PC-3 (cell line): ENCODE measurements at regions of chr18 and their contacts with region 1.

Region 1: DNA sequence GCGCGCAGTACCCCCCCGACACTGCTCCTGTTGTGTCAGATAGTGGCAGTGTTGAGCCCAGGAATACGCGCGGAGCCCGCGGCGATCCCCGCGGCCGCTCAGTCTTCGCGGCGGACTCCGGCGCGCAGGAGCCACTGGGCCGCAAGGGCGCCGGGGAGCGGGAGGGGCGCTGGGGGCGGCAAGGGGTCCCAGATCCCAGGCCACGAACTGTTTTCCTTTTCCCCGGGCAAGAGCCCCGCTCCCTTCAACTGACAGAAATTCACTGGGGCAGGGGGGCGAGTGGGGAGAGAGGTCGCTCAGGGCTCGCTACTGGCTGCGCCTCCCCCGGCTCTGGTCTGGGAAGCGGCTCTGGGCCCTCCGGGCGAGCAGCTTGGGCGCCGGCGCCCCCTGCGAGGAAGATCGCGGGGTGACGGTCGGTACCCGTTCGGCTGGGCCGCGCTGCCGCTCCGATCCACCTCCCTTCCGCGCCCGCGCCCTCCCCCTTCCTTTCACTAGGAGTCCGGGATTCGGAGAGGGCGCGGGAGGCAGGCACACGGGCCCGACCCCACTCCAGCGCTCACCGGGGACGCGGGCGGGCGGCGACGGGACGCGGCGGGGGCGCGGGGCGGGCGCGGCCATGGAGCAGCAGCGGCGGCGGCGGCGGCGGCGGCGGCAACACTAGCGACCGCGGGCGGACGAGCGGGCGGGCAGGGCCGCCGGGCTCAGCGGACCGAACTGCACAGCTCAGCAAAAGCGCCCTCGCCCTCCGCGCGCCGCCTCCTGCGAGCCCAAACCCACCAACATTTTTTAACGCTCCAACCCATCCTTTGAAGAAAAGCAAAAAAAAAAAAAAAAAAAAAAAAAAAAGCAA is 1.4 kb upstream of the SETBP1 start:
- DNase-seq: peak; percentile 67
- ATAC-seq: peak; percentile 80
- H3K4me3 ChIP-seq: peak overlapping the region; percentile 73
- H3K27ac ChIP-seq: peak overlapping the region; percentile 43
- H3K4me1 ChIP-seq: peaks cover 11% of the 10 kb centered on the region; the same call in 1 of the 2 replicates
- H3K27me3 ChIP-seq: no peaks in the 10 kb centered on the region
- CTCF ChIP-seq: peak; percentile 43; the same call in 1 of the 2 replicates

Region 2: DNA sequence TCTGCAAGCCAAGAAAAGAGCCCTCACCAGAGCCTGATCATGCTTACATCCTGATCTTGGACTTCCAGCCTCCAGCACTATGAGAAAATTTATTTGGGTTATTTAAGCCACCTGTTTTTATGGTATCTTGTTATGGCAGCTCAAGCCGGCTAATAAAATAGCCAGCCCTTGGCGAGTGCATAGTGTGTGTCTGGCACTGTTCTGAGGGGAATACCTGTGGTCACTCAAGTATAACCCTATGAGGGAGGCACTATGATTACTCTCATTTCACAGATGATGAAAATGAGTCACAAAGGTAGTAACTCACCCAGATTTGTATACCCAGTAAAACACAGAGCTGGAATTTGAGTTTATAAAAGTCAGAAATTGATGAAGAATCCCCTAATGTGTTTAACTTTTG is 555.5 kb before region 1 on chr18:
- CTCF ChIA-PET with region 1: interaction called, 7 read pairs
- POLR2A ChIA-PET with region 1: no interaction called
- intact Hi-C with region 1: loop called (anchors 10 kb)
- DNase-seq: peak; percentile 55
- ATAC-seq: peak; percentile 96
- H3K4me3 ChIP-seq: no peak overlapping the region
- H3K27ac ChIP-seq: no peak overlapping the region
- H3K4me1 ChIP-seq: peaks cover 3% of the 10 kb centered on the region; the same call in 1 of the 2 replicates
- H3K27me3 ChIP-seq: no peaks in the 10 kb centered on the region
- CTCF ChIP-seq: no peak

Region 3: GRCh38 chr18:44464398-44465180 is 214.7 kb before region 1 on chr18:
- CTCF ChIA-PET with region 1: no interaction called
- POLR2A ChIA-PET with region 1: no interaction called
- intact Hi-C with region 1: no loop called
- DNase-seq: no peak
- ATAC-seq: no peak
- H3K4me3 ChIP-seq: no peak overlapping the region
- H3K27ac ChIP-seq: no peak overlapping the region
- H3K4me1 ChIP-seq: no peaks in the 10 kb centered on the region
- H3K27me3 ChIP-seq: no peaks in the 10 kb centered on the region
- CTCF ChIP-seq: no peak

Region 4: DNA sequence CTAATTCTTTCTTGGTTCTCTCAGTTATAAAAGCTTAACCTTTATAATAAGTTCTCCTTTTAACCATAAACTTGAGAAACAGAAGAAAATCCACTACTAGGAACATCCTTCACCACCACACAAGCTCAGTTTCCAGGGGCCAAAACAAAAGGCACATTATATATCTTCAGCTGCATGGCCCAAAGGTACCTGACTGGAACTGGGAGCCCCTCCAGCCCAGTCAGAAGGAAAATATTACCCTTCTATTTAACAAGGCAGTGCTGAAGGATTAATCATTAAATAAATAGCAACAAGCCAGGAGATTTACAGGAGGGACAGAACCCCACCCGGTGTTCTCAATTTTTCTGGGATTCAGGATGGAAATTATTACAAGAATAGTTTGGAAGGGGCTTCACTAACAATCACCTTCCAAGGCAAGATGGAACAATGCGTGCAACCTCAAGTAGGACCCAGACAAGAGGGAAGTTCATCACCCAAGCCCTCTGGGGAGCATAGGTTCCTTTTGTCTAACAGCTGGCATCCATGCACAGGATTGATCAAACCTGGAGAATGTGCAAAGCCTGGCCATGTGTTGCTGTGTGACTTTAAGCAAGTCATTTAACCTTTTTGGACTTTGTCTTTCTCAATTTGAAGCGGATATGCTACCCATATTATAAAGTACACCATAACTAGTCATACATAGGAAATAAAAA is 158.2 kb before region 1 on chr18:
- CTCF ChIA-PET with region 1: no interaction called
- POLR2A ChIA-PET with region 1: interaction called, 11 read pairs
- intact Hi-C with region 1: no loop called
- DNase-seq: peak; percentile 71
- ATAC-seq: peak; percentile 94
- H3K4me3 ChIP-seq: peak overlapping the region; percentile 9; the same call in 1 of the 2 replicates
- H3K27ac ChIP-seq: peak overlapping the region; percentile 91
- H3K4me1 ChIP-seq: peaks cover 35% of the 10 kb centered on the region
- H3K27me3 ChIP-seq: no peaks in the 10 kb centered on the region
- CTCF ChIP-seq: no peak

Region 5: GRCh38 chr18:44823782-44824181 is 144.5 kb after region 1 on chr18:
- CTCF ChIA-PET with region 1: interaction called, 4 read pairs
- POLR2A ChIA-PET with region 1: no interaction called
- intact Hi-C with region 1: loop called (anchors 2 kb)
- DNase-seq: peak; percentile 75
- ATAC-seq: peak; percentile 61
- H3K4me3 ChIP-seq: peak overlapping the region; percentile 43; the same call in 1 of the 2 replicates
- H3K27ac ChIP-seq: peak overlapping the region; percentile 92
- H3K4me1 ChIP-seq: peaks cover 40% of the 10 kb centered on the region
- H3K27me3 ChIP-seq: no peaks in the 10 kb centered on the region
- CTCF ChIP-seq: no peak

Region 6: DNA sequence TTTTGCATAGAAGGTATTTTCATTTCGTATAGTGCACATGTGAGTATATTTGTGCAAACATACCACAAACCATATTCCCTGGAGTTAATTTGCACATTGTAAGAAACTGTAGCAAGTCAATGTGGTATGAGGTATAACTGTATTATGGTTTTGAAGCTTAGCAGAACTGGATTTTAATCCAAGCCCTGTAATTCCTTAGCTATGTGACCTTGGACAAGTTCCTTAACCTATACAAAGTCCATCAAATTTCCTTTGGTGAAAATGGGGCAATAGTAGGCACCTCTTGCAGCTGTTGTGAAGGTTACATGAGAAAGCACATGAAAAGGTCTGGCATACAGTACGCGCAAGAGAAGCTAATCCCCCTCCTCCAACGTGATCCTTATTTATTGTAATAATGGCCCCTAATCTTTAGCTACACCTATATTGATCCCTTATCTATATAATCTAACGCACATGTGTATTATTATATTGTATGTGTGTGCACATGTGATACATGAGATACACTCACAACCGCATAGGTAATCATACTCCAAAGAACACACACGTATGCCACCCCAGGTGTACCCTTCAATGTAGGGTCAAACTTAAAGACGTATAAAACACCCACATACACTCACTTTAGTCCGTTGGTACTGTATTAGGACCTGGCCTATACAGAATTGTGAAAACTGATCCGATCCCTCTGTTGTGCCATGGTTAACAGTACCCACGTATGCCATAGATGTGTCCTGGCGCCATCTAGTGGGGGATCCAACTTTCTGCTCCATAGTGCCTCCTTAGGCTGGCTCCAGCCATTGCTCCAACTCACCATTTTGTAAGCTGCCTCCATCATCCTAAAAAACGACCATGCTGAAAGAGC is 533.1 kb after region 1 on chr18:
- CTCF ChIA-PET with region 1: no interaction called
- POLR2A ChIA-PET with region 1: no interaction called
- intact Hi-C with region 1: loop called (anchors 5 kb)
- DNase-seq: peak; percentile 69
- ATAC-seq: peak; percentile 84
- H3K4me3 ChIP-seq: no peak overlapping the region
- H3K27ac ChIP-seq: no peak overlapping the region
- H3K4me1 ChIP-seq: peaks cover 3% of the 10 kb centered on the region; the same call in 1 of the 2 replicates
- H3K27me3 ChIP-seq: no peaks in the 10 kb centered on the region
- CTCF ChIP-seq: peak; percentile 89